Activated CD4-positive, alpha-beta T cell treated with anti-CD3 and anti-CD28 coated beads for 36 hours (primary cell): ENCODE measurements at regions of chr2 and their contacts with region 1.

Region 1: GRCh38 chr2:3423492-3424175 is 44.1 kb downstream of the TRAPPC12 start:
- DNase-seq: peak; percentile 86
- ATAC-seq: peak; percentile 80
- H3K4me3 Mint-ChIP-seq: no peak overlapping the region
- H3K27ac Mint-ChIP-seq: no peak overlapping the region
- H3K4me1 Mint-ChIP-seq: peaks cover 3% of the 10 kb centered on the region
- H3K27me3 Mint-ChIP-seq: no peaks in the 10 kb centered on the region

Region 2: GRCh38 chr2:2243666-2244065 is 1180.0 kb before region 1 on chr2:
- CTCF ChIA-PET with region 1: no interaction called
- POLR2A ChIA-PET with region 1: no interaction called
- intact Hi-C with region 1: no loop called
- DNase-seq: no peak
- ATAC-seq: no peak
- H3K4me3 Mint-ChIP-seq: no peak overlapping the region
- H3K27ac Mint-ChIP-seq: no peak overlapping the region
- H3K4me1 Mint-ChIP-seq: no peaks in the 10 kb centered on the region
- H3K27me3 Mint-ChIP-seq: no peaks in the 10 kb centered on the region

Region 3: DNA sequence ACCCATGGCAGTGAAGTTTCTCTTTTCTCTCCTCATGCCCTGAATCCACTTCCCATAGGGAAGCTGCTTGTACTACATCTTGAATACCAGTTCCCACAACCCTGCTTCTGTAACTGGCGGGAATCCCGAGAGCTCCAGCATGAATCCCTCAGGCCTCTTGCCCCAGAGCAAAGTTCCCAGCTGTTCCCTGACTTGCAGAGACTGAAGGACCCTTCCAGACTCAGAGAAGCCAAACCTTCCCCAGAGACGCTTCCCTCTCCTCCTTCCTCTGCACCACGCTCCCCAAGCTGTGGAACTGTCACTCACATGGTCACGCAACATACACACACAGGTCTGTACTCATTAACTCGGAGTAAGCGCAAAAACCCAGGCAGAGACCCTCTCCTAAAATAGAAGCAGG is 17.8 kb before region 1 on chr2:
- CTCF ChIA-PET with region 1: interaction called, 14 read pairs
- POLR2A ChIA-PET with region 1: no interaction called
- intact Hi-C with region 1: no loop called
- DNase-seq: no peak
- ATAC-seq: no peak
- H3K4me3 Mint-ChIP-seq: no peak overlapping the region
- H3K27ac Mint-ChIP-seq: peak overlapping the region; percentile 34
- H3K4me1 Mint-ChIP-seq: peaks cover 5% of the 10 kb centered on the region
- H3K27me3 Mint-ChIP-seq: no peaks in the 10 kb centered on the region

Region 4: DNA sequence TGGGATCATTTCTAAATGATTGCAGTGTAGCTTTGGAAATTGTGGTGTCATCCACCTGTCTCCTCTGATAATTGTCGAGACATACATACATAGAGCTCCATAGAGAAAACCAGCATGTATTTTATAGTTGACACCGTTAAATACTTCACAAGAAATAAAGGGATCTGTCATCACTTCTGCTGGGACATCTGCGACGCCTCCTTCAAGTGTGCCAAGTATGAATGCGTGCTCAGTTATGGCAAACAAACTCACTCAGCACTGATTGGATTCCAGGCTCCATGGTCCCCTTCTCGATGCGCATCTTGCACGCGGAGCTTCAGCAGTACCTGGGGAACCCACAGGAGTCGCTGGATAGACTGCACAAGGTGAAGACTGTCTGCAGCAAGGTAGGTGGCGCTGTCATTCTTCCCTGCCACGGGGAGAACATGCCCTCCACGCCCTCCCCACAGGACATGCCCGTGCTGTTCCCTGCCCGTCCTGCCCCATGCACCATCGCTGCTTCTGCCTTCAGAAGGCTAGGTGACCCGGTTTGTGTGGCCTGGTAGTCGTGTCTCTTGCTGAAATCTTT is 20.0 kb after region 1 on chr2:
- CTCF ChIA-PET with region 1: interaction called, 13 read pairs
- POLR2A ChIA-PET with region 1: no interaction called
- intact Hi-C with region 1: no loop called
- DNase-seq: no peak
- ATAC-seq: no peak
- H3K4me3 Mint-ChIP-seq: no peak overlapping the region
- H3K27ac Mint-ChIP-seq: no peak overlapping the region
- H3K4me1 Mint-ChIP-seq: peaks cover 10% of the 10 kb centered on the region
- H3K27me3 Mint-ChIP-seq: no peaks in the 10 kb centered on the region

Region 5: GRCh38 chr2:3461801-3462492 is 38.3 kb after region 1 on chr2:
- CTCF ChIA-PET with region 1: interaction called, 18 read pairs
- POLR2A ChIA-PET with region 1: no interaction called
- intact Hi-C with region 1: loop called (anchors 2 to 5 kb)
- DNase-seq: peak; percentile 51
- ATAC-seq: peak; percentile 69
- H3K4me3 Mint-ChIP-seq: no peak overlapping the region
- H3K27ac Mint-ChIP-seq: peak overlapping the region; percentile 84
- H3K4me1 Mint-ChIP-seq: peaks cover 9% of the 10 kb centered on the region
- H3K27me3 Mint-ChIP-seq: no peaks in the 10 kb centered on the region

Region 6: GRCh38 chr2:3672861-3673678 is 249.4 kb after region 1 on chr2:
- CTCF ChIA-PET with region 1: no interaction called
- POLR2A ChIA-PET with region 1: no interaction called
- intact Hi-C with region 1: no loop called
- DNase-seq: no peak
- ATAC-seq: no peak
- H3K4me3 Mint-ChIP-seq: no peak overlapping the region
- H3K27ac Mint-ChIP-seq: no peak overlapping the region
- H3K4me1 Mint-ChIP-seq: no peaks in the 10 kb centered on the region
- H3K27me3 Mint-ChIP-seq: peaks cover 3% of the 10 kb centered on the region